ENCODE measurements at regions of chr14 and their contacts with region 1.

Region 1: DNA sequence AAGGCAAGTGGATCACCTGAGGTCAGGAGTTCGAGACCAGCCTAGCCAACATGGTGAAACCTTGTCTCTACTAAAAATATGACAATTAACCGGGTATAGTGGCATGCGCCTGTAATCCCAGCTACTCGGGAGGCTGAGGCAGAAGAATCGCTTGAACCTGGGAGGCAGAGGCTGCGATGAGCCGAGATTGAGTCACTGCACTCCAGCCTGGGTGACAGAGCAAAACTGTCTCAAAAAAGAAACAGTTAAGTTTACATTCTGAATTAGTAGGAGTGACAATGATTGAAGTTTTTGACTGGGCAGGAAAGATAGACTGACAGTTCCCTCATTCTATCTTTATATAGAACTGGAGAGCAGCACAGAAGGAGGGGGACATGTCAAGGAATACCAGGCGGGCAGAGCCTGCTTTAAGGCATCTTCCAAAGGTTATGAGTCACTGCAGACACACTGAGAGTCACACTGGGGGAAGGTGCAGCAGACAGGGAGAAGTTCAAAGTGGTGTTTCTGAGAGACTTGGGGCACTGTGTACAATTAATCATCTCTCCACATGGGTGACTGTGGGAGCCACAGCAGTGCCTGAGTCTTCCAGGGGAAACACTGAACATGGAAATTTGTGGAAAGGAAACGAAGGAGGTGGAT is 42.8 kb upstream of the RNASE3 start:
- DNase-seq: peak; percentile 47
- H3K4me3 Mint-ChIP-seq: no peak overlapping the region
- H3K27ac Mint-ChIP-seq: peak overlapping the region; percentile 16
- H3K4me1 Mint-ChIP-seq: peaks cover 13% of the 10 kb centered on the region
- H3K27me3 Mint-ChIP-seq: peaks cover 48% of the 10 kb centered on the region
- CTCF ChIP-seq: no peak

Region 2: DNA sequence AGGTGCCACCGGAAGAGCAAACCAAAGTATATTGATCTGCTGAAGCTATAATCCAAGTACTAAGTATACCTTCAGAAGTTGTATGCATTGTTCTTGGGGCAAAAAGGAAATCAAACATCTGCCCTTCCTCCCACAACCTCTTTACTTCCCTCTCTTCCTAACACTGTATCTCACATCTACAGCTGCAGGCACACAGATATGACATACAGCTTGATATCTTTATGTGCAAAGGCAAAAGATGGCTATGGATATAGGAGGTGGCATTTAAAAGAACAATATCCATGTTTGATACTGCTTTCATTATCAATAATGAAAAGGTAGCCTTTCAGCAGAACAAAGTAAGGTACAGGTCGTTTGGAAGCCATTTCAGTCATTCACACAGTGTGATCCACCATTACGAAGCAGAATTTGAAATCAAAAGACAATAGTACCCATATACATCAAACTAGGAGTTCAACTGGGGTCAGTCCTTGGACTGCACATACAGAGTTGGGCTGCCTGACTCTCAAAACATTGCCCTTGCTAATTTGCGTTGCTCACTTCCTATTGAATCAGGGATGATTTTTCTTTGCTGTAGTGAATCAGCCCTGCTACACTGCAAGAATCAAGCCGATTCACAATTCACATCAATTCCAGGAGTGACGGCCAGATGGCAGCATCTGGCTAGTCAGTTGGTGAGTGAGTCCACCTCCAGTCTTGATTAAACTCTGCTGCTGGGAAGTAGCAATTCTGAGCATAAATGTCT is 151.0 kb before region 1 on chr14:
- CTCF ChIA-PET with region 1: interaction called, 121 read pairs
- POLR2A ChIA-PET with region 1: no interaction called
- intact Hi-C with region 1: no loop called
- DNase-seq: peak; percentile 78
- H3K4me3 Mint-ChIP-seq: no peak overlapping the region
- H3K27ac Mint-ChIP-seq: no peak overlapping the region
- H3K4me1 Mint-ChIP-seq: no peaks in the 10 kb centered on the region
- H3K27me3 Mint-ChIP-seq: no peaks in the 10 kb centered on the region
- CTCF ChIP-seq: peak; percentile 73